Spleen (tissue), 13 donors: ENCODE measurements at regions of chr6 and their contacts with region 1.

Region 1: GRCh38 chr6:165562421-165563090 is 100.5 kb downstream of the PDE10A start:
- DNase-seq: no peak
- H3K4me3 ChIP-seq: no peak overlapping the region
- H3K27ac ChIP-seq: peak overlapping the region in 1 of 8 donors; percentile 10
- H3K4me1 ChIP-seq: no peaks in the 10 kb centered on the region
- H3K27me3 ChIP-seq: no peaks in the 10 kb centered on the region
- CTCF ChIP-seq: no peak
- POLR2A ChIP-seq: no peak

Region 2: GRCh38 chr6:164442572-164442971 is 1120.0 kb before region 1 on chr6:
- intact Hi-C with region 1: no loop called
- DNase-seq: no peak
- H3K4me3 ChIP-seq: no peak overlapping the region
- H3K27ac ChIP-seq: no peak overlapping the region
- H3K4me1 ChIP-seq: no peaks in the 10 kb centered on the region
- H3K27me3 ChIP-seq: no peaks in the 10 kb centered on the region
- CTCF ChIP-seq: no peak
- POLR2A ChIP-seq: no peak

Region 3: GRCh38 chr6:165662749-165663282 is 100.3 kb after region 1 on chr6 and contains the start of gene PDE10A:
- intact Hi-C with region 1: loop called (anchors 10 kb)
- DNase-seq: no peak
- H3K4me3 ChIP-seq: peak within 1 kb of the TSS; percentile 30 to 72 (median 50)
- H3K27ac ChIP-seq: peak within 1 kb of the TSS in 7 of 8 donors; percentile 55 to 85 (median 75)
- H3K4me1 ChIP-seq: peaks cover 0 to 46% (median 24%) of the 10 kb centered on the region in 6 donors
- H3K27me3 ChIP-seq: peaks cover 0 to 93% (median 49%) of the 10 kb centered on the region in 7 donors
- CTCF ChIP-seq: peak in 1 of 11 experiments; percentile 22
- POLR2A ChIP-seq: no peak
- total RNA-seq, gene PDE10A: 7.5 to 28.2 (median 10.6) TPM